Naive thymus-derived CD8-positive, alpha-beta T cell (primary cell): ENCODE measurements at regions of chr17 and their contacts with region 1.

Region 1: DNA sequence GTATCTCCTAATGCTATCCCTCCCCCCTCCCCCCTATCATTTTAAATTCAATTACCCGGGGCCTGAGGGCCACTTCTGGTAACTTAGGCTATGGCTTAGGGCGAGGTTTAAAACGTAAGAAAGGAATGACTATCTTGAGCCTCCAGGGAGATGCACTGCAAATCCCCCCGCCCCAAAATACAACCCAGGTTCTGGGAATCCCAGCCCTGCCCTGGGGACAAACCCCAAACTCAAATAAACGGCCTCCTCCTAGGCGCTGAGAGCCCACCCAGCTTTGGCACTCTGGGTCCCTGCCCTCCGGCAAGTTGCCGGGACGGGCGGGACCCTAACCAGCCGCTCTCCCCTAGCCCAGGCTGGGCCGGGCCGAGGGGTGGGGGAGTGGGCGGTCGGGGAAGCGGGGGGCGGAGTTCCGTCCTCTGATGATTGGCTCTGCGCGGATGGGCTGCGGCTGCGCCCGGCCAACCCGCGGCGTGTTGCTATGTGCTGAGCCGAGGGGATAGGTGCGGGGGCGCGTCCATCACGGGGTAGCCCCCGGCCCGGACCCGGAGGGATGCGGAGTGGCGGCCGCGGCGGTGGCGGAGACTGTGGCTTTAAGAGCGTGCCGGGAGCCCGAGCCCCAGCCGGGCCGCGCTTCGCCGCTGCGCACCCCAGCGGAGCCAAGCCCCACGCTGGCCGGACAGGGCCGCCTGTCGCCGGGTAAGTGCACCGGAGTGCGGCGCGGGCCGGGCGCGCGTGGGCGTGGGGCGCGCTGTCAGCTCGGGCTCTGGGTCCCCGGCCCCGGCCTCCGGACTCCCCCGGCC is at the start of gene YPEL2:
- DNase-seq: peak; percentile 82 to 94 (median 86)
- ATAC-seq: peak; percentile 88 to 90
- H3K4me3 Mint-ChIP-seq: peak within 1 kb of the TSS; percentile 88 to 97 (median 92)
- H3K27ac Mint-ChIP-seq: peak within 1 kb of the TSS; percentile 86 to 99 (median 94)
- H3K4me1 Mint-ChIP-seq: peaks cover 40 to 83% (median 79%) of the 10 kb centered on the region in 4 donors
- H3K27me3 Mint-ChIP-seq: no peaks in the 10 kb centered on the region
- polyA plus RNA-seq, gene YPEL2: 22.0 to 28.7 (median 25.2) TPM

Region 2: DNA sequence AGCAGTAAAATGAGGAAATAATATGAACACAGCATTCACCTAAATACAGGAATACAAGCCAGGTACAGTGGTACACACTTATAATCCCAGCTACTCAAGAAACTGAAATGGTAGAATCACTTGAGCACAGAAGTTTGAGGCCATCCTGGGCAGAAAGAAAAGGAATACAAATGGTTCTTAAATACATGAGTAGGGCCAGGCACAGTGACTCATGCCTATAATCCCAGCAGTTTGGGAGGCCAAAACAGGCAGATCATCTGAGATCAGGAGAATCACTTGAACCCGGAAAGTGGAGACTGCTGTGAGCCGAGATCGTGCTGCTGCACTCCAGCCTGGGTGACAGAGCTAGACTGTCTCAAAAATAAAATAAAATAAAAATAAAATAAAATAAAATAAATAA is 144.5 kb before region 1 on chr17:
- POLR2A ChIA-PET with region 1: no interaction called
- DNase-seq: no peak
- ATAC-seq: no peak
- H3K4me3 Mint-ChIP-seq: no peak overlapping the region
- H3K27ac Mint-ChIP-seq: no peak overlapping the region
- H3K4me1 Mint-ChIP-seq: peaks cover 0 to 2% (median under 1%) of the 10 kb centered on the region in 4 donors
- H3K27me3 Mint-ChIP-seq: no peaks in the 10 kb centered on the region

Region 3: DNA sequence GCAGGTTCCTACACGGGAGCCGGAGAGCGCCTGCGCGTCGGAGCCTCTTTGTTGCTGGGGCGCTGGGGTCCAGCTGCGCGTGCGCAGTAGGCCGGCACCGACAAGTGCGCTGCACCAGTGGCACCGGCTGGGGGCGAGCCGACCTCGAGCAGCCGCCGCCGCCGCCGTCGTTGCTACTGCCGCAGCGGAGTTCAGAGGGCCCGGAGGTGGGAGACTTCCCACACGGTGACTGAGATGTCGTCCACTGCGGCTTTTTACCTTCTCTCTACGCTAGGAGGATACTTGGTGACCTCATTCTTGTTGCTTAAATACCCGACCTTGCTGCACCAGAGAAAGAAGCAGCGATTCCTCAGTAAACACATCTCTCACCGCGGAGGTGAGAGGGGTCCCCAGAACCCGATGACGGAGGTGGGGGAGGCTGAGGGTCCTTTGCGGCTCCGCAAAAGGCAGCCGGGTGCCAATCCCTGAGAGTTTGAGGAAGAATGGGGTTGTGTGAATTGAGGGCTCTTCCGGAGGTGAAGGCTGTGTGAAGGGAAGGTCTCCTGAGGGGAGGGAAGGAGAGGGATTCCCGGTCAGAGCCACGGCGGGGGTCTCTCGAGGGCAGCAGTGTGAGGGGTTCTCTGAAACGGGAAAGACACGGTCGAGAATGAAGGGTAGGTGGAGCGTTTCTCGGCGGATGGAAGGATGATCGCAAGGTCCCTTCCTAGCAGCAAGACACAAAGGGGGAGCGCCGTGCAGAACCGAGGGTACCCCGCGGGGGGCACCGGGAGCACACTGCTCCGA is 110.8 kb before region 1 on chr17 and contains the start of gene GDPD1:
- POLR2A ChIA-PET with region 1: no interaction called
- DNase-seq: peak; percentile 93 to 99 (median 97)
- ATAC-seq: peak; percentile 96 to 97
- H3K4me3 Mint-ChIP-seq: peak within 1 kb of the TSS; percentile 98 to 100 (median 100)
- H3K27ac Mint-ChIP-seq: peak within 1 kb of the TSS; percentile 93 to 100 (median 100)
- H3K4me1 Mint-ChIP-seq: peaks cover 8 to 15% (median 13%) of the 10 kb centered on the region in 4 donors
- H3K27me3 Mint-ChIP-seq: no peaks in the 10 kb centered on the region
- polyA plus RNA-seq, gene GDPD1: 2.1 to 4.0 (median 2.6) TPM

Region 4: GRCh38 chr17:59266751-59267150 is 64.6 kb before region 1 on chr17:
- POLR2A ChIA-PET with region 1: no interaction called
- DNase-seq: no peak
- ATAC-seq: no peak
- H3K4me3 Mint-ChIP-seq: no peak overlapping the region
- H3K27ac Mint-ChIP-seq: no peak overlapping the region
- H3K4me1 Mint-ChIP-seq: no peaks in the 10 kb centered on the region
- H3K27me3 Mint-ChIP-seq: no peaks in the 10 kb centered on the region

Region 5: DNA sequence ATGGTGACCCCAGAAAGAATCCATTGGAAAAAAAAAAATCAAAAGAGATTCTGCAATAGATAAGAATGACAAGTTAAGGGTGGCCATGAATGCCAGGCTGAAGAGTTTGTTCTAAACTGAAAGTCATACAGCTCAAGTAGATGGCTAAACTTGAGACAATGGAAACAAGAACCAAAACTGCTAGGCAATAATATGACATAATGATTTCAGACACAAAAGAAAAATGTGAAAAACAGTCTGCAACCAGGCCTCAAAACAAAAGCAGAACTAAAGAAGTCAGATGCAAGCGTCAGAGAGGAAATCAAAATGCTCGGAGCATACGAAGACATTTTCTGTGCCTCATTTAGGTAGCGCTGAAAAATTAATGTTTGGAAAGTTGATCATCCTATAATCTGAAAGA is 54.3 kb before region 1 on chr17:
- POLR2A ChIA-PET with region 1: no interaction called
- DNase-seq: no peak
- ATAC-seq: peak in 1 of 2 donors; percentile 33
- H3K4me3 Mint-ChIP-seq: peak overlapping the region in 1 of 10 donors; percentile 36
- H3K27ac Mint-ChIP-seq: peak overlapping the region in 2 of 10 donors; percentile 62 to 73
- H3K4me1 Mint-ChIP-seq: peaks cover 0 to 16% (median 0%) of the 10 kb centered on the region in 4 donors
- H3K27me3 Mint-ChIP-seq: no peaks in the 10 kb centered on the region

Region 6: DNA sequence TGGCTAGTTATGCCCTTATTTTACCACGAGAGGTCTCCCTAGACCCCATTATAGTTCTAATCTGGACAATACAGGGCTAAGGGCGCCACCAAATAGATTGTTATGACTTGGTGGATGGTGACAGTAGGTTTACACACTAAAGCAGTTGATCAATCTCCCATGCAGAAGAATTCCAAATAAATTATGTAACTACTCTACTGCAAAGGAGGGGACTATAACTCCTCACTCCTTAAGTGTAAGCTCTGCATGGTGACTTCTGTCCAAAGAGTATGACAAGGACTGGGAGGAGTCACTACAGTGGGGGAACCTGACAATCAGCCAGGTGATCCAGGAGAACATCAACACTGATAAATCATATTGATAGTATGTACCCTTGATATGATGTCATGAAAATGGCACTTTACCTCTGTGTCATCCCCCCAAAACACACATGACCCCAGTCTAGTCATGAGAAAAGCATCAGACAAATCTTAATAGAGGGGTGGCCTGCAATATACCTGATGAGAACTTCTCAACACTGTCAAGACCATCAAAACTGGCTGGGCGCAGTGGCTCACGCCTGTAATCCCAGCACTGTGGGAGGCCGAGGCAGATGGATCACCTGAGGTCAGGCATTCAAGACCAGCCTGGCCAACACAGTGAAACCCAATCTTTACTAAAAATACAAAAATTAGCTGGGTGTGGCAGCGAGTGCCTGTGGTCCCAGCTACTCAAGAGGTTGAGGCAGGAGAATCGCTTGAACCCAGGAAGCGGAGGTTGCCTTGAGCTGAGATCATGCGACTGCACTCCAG is 20.0 kb before region 1 on chr17:
- POLR2A ChIA-PET with region 1: interaction called, 11 read pairs
- DNase-seq: peak in 8 of 10 donors; percentile 31 to 71 (median 60)
- ATAC-seq: peak; percentile 95 to 99
- H3K4me3 Mint-ChIP-seq: no peak overlapping the region
- H3K27ac Mint-ChIP-seq: peak overlapping the region in 1 of 10 donors; percentile 76
- H3K4me1 Mint-ChIP-seq: peaks cover 0 to 6% (median 3%) of the 10 kb centered on the region in 4 donors
- H3K27me3 Mint-ChIP-seq: no peaks in the 10 kb centered on the region

Region 7: DNA sequence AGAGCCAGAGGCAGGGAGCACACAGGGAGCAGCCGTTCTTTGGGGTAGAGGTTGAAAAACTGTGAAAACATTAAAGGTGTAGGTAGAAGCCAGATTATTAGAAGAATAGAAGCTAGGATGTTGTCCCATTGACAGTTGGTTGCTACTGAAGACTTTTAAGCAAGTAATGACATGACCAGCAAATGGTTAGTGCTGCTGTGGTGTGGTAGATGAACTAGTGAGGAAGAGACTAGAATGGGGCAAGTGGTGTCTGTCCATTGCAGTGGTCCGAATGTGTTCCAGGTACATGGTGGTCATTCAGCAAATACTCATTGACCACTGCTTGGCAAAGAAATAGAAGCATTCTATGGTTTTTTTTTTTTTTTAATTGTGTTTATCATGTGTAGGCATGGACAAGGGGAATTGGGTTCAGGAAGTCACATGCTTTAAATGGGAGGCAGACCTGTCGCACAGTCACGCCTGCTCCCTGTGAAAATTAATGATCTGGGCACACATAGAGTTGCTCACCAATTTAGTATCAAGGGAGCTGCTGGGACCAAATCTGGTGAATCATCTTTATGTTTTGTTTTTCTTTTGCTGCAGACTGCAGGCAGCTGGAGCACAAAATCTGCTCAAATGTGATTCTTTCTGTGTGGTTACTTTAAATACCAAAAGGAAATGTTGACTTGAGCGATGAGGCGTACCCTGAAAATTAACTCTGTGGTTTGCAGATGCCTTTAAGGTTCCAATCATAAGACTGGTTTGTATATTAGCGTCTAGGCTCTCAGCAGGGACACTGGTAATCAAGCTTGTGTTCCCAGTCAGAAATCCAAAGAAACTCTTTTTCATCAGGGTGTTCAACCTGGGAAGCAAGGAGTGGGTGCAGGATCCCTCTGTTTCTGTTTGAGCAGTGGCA is 30.8 kb after region 1 on chr17:
- POLR2A ChIA-PET with region 1: interaction called, 104 read pairs
- DNase-seq: peak in 8 of 10 donors; percentile 12 to 75 (median 38)
- ATAC-seq: peak; percentile 64 to 72
- H3K4me3 Mint-ChIP-seq: peak overlapping the region; percentile 75 to 91 (median 85)
- H3K27ac Mint-ChIP-seq: peak overlapping the region; percentile 88 to 99 (median 96)
- H3K4me1 Mint-ChIP-seq: peaks cover 42 to 96% (median 91%) of the 10 kb centered on the region in 4 donors
- H3K27me3 Mint-ChIP-seq: no peaks in the 10 kb centered on the region

Region 8: DNA sequence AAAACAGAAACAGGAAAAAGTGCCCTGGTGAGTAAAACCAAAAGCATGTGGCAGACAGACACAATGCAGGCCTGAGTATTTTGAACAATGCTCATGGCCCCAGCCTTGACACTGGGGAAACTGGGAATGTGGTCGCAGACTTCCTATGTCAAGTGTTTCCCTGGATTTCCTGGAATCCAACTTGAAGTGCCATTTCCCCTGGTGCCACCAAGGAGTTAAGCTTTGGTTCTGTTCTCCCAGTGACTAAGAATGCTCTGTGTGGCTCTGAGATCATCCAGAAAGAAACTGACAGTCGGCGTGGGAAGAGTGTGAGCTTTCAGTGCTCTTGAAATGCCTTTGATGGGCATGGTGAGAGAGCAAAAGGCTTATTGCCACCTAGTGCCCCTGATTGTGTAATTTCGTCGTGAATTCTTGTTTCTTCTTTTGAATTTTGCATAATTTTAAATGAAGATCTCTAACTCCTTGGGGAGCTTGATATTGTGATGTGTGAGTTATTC is 96.1 kb after region 1 on chr17:
- POLR2A ChIA-PET with region 1: interaction called, 46 read pairs
- DNase-seq: peak in 3 of 10 donors; percentile 7 to 38 (median 34)
- ATAC-seq: peak; percentile 53 to 70
- H3K4me3 Mint-ChIP-seq: no peak overlapping the region
- H3K27ac Mint-ChIP-seq: peak overlapping the region in 4 of 10 donors; percentile 3 to 67 (median 34)
- H3K4me1 Mint-ChIP-seq: peaks cover 1 to 13% (median 9%) of the 10 kb centered on the region in 4 donors
- H3K27me3 Mint-ChIP-seq: peaks cover 0 to 3% (median 0%) of the 10 kb centered on the region in 5 donors

Region 9: DNA sequence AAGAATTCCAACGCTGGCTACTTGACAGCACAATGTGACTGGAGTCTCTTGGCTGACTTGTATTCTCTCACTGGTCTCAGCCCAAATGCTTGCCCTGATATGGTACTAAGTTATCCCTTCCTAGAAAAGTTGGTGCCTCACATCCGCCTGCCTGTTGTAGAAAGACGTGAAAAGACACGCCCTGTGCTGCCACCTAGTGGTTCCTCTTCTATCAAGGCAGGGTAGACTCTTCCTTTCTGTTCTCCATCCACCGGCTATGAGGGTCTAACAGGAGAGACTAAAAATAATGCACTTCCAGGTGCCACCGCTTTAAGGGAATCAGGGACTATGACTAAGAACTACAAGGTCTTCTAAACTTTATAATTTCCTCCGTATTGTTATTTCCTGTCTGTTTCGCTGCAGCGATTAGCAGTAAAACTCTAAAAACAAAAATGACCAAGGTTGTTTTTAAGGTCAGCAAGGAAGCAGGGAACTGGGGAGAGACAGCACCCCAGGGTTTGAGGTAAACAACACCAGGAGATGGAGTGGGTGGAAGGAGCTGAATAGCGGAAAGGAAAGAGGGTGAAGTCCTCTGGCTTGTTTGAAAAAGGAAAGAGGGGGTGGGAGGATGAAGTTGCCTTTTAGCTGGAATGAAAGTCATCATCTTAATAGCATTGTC is 109.6 kb after region 1 on chr17:
- POLR2A ChIA-PET with region 1: interaction called, 25 read pairs
- DNase-seq: peak; percentile 68 to 94 (median 82)
- ATAC-seq: peak; percentile 99
- H3K4me3 Mint-ChIP-seq: peak overlapping the region in 5 of 10 donors; percentile 0 to 46 (median 17)
- H3K27ac Mint-ChIP-seq: peak overlapping the region in 5 of 10 donors; percentile 6 to 70 (median 54)
- H3K4me1 Mint-ChIP-seq: peaks cover 6 to 43% (median 21%) of the 10 kb centered on the region in 4 donors
- H3K27me3 Mint-ChIP-seq: no peaks in the 10 kb centered on the region